GM12878 (cell line): ENCODE measurements at regions of chr4 and their contacts with region 1.

Region 1: DNA sequence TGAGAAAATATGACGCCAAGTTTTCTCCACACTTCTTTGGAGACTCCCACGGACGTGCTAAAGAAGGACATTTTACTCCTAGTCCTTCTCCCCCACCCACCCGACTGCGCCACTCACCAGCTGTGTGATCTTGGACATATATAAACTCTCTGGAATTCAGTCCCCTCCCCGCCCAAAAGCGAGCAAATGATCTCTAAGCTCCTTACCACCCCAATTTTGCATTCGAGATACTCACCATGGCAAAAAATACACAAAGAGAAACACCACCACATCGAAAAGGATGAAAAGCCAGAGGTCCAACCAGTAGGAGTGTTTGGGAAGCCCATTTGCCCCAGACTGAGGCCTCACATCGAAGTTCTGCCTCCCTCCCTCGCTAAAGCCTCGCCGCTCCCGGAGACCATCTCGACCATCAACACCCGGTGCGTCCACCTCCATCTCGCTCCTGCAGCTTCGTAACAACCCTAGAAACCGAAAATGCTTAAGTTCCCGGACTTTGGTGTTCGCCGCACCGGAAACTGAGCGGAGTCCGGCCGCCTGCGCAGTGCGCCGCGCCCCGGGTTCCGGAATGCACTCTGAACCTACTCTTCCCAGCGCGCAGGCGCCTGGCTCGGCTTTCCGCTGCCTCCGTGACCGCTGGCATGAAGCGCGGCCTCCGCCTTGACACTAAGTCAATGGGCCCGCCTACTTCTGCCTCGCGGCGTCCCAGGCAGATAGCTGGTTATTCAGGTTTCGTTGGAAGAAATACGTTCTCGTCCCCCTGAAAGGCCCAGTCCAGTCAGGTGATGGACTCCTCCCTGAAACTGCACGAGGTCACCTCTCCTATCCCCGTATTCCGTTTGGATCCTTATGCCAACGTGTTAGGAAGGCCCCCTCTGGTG is 21.6 kb downstream of the FABP2 start:
- DNase-seq: peak; percentile 80
- ATAC-seq: peak; percentile 99
- H3K4me3 ChIP-seq: peak overlapping the region; percentile 92
- H3K27ac ChIP-seq: peak overlapping the region; percentile 77
- H3K4me1 ChIP-seq: no peaks in the 10 kb centered on the region
- H3K27me3 ChIP-seq: no peaks in the 10 kb centered on the region
- CTCF ChIP-seq: 0 out of 6 replicates have a peak, but pooled peaks of 2 of the 3 experiments have one; percentile 14 to 18
- EP300 ChIP-seq: 0 out of 4 replicates have a peak, but pooled peaks of 1 of the 2 experiments have one; percentile 25
- POLR2A ChIP-seq: peak; percentile 92
- RAD21 ChIP-seq: no peak

Region 2: GRCh38 chr4:118765399-118765798 is 534.9 kb before region 1 on chr4:
- CTCF ChIA-PET with region 1: no interaction called
- POLR2A ChIA-PET with region 1: no interaction called
- RAD21 ChIA-PET with region 1: no interaction called
- SMC1A ChIA-PET with region 1: no interaction called
- in situ Hi-C with region 1: loop called (anchors 10 kb)
- intact Hi-C with region 1: no loop called
- DNase-seq: no peak
- ATAC-seq: no peak
- H3K4me3 ChIP-seq: no peak overlapping the region
- H3K27ac ChIP-seq: no peak overlapping the region
- H3K4me1 ChIP-seq: peaks cover 5% of the 10 kb centered on the region; the same call in 1 of the 2 replicates
- H3K27me3 ChIP-seq: no peaks in the 10 kb centered on the region
- CTCF ChIP-seq: no peak
- EP300 ChIP-seq: no peak
- POLR2A ChIP-seq: no peak
- RAD21 ChIP-seq: no peak

Region 3: DNA sequence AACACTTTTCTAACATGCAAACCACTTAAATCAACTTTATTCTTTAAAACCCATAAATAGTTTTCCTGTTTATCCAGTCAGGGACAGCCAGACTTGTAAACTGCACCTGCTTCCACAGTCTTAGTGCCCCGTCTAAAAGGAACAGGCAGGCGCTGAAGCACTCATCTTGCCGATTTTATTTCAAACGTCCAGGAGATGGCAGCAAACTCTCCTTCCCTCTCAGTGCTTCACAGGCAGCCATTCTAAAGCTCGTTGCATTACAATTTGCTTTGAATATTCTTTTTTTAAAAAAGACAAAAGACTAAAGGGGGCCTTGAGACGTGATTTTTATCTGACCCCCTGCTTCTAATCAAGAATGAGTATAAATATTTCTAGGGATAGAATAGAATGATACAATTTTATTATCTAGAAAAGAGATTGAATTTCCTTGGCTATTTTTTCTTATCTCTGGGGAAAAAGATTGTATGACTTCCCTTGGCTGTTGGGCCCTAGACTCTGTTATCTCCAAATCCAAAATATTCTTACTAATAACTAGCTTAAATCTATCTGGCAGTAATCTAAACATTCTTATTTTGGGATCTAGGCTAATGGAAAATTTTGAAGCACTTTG is 258.3 kb before region 1 on chr4:
- CTCF ChIA-PET with region 1: interaction called, 18 read pairs
- POLR2A ChIA-PET with region 1: no interaction called
- RAD21 ChIA-PET with region 1: no interaction called
- SMC1A ChIA-PET with region 1: interaction called, 4 read pairs
- in situ Hi-C with region 1: loop called (anchors 5 kb)
- intact Hi-C with region 1: no loop called
- DNase-seq: peak; percentile 12
- ATAC-seq: peak; percentile 95
- H3K4me3 ChIP-seq: no peak overlapping the region
- H3K27ac ChIP-seq: no peak overlapping the region
- H3K4me1 ChIP-seq: peaks cover 6% of the 10 kb centered on the region; the same call in 1 of the 2 replicates
- H3K27me3 ChIP-seq: peaks cover 0 to 2% of the 10 kb centered on the region in 2 experiments; a peak in 1 of 4 replicates
- CTCF ChIP-seq: peak; percentile 57 to 62 (median 58)
- EP300 ChIP-seq: no peak
- POLR2A ChIP-seq: no peak
- RAD21 ChIP-seq: peak; percentile 78

Region 4: GRCh38 chr4:119286377-119287002 is 13.8 kb before region 1 on chr4:
- CTCF ChIA-PET with region 1: interaction called, 6 read pairs
- POLR2A ChIA-PET with region 1: no interaction called
- RAD21 ChIA-PET with region 1: no interaction called
- SMC1A ChIA-PET with region 1: interaction called, 10 read pairs
- in situ Hi-C with region 1: no loop called
- intact Hi-C with region 1: no loop called
- DNase-seq: no peak
- ATAC-seq: no peak
- H3K4me3 ChIP-seq: no peak overlapping the region
- H3K27ac ChIP-seq: no peak overlapping the region
- H3K4me1 ChIP-seq: no peaks in the 10 kb centered on the region
- H3K27me3 ChIP-seq: no peaks in the 10 kb centered on the region
- CTCF ChIP-seq: peak; percentile 48 to 63 (median 49); a peak in 5 of 6 replicates
- EP300 ChIP-seq: no peak
- POLR2A ChIP-seq: no peak
- RAD21 ChIP-seq: peak; percentile 86

Region 5: DNA sequence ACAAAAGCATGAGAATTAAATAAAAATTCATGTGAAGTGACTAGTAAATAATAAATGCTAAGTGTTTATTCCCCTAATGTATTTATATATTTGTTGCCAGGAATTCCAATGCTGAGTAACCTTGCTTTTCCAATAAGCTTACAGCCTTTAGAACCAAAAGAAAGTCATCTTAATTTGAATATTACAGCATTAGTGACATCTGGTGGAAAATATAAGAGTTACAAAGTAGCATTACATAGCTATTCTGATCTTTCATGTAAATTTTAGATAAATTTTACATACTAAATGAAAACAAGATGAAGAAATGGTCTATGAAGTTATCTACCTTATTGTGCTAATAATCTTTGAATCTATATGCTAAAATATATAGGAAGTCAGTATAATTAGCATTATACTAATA is 755.9 kb after region 1 on chr4:
- CTCF ChIA-PET with region 1: no interaction called
- POLR2A ChIA-PET with region 1: no interaction called
- RAD21 ChIA-PET with region 1: interaction called, 4 read pairs
- SMC1A ChIA-PET with region 1: no interaction called
- in situ Hi-C with region 1: loop called (anchors 5 kb)
- intact Hi-C with region 1: loop called (anchors 5 kb)
- DNase-seq: no peak
- ATAC-seq: peak; percentile 60
- H3K4me3 ChIP-seq: no peak overlapping the region
- H3K27ac ChIP-seq: no peak overlapping the region
- H3K4me1 ChIP-seq: peaks cover 16% of the 10 kb centered on the region
- H3K27me3 ChIP-seq: no peaks in the 10 kb centered on the region
- CTCF ChIP-seq: peak in 1 of 3 experiments; percentile 5; a peak in 2 of 6 replicates
- EP300 ChIP-seq: no peak
- POLR2A ChIP-seq: no peak
- RAD21 ChIP-seq: no peak